ENCODE measurements at regions of chr20 and their contacts with region 1.

Region 1: GRCh38 chr20:44598423-44599305 is 16.3 kb downstream of the PKIG start:
- DNase-seq: peak; percentile 63
- H3K4me3 ChIP-seq: peak overlapping the region; percentile 51
- H3K27ac ChIP-seq: peak overlapping the region; percentile 93
- H3K4me1 ChIP-seq: peaks cover 100% of the 10 kb centered on the region
- H3K27me3 ChIP-seq: no peaks in the 10 kb centered on the region
- CTCF ChIP-seq: peak; percentile 33

Region 2: GRCh38 chr20:44310664-44311639 is 287.7 kb before region 1 on chr20 and contains the start of gene FITM2:
- intact Hi-C with region 1: no loop called
- DNase-seq: peak; percentile 99
- H3K4me3 ChIP-seq: peak within 1 kb of the TSS; percentile 85
- H3K27ac ChIP-seq: peak within 1 kb of the TSS; percentile 91
- H3K4me1 ChIP-seq: peaks cover 56% of the 10 kb centered on the region
- H3K27me3 ChIP-seq: no peaks in the 10 kb centered on the region
- CTCF ChIP-seq: peak; percentile 95
- total RNA-seq, gene FITM2: 160 TPM

Region 3: DNA sequence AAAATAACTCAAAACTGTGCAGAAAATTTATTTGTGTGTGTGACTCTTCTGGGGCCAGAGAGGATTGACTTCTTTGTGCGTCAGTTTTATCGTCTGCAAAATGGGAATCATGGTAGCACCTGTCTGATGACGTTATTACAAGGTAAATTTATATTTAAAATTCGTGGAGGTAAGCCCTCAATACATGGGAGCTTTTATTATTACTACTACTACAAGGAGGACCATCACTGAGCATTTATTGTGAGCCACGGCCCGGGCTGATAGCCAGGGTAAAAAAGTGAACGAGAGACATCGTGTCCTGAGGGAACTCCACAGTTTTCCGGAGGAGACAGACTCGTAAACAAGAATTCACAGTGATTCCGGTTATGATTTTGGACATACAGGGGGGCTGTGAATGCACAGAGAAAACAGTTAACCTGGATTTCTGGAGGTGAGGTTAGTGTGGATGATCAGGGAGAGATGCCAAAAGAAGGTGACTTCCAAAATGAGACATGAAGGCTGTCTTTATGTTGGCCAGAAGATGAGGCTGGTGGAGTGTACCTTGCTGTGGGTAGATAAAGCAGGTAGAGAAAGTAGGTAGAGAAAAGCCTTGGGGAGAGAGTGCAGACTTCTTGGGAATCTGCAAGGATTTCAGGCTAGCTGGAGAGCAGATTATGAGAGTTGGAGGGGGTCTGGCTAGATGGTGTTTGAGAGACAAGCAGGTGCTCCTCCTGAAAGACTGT is 66.2 kb before region 1 on chr20:
- intact Hi-C with region 1: loop called (anchors 10 kb)
- DNase-seq: peak; percentile 34
- H3K4me3 ChIP-seq: peak overlapping the region; percentile 80
- H3K27ac ChIP-seq: peak overlapping the region; percentile 80
- H3K4me1 ChIP-seq: peaks cover 27% of the 10 kb centered on the region
- H3K27me3 ChIP-seq: no peaks in the 10 kb centered on the region
- CTCF ChIP-seq: no peak

Region 4: DNA sequence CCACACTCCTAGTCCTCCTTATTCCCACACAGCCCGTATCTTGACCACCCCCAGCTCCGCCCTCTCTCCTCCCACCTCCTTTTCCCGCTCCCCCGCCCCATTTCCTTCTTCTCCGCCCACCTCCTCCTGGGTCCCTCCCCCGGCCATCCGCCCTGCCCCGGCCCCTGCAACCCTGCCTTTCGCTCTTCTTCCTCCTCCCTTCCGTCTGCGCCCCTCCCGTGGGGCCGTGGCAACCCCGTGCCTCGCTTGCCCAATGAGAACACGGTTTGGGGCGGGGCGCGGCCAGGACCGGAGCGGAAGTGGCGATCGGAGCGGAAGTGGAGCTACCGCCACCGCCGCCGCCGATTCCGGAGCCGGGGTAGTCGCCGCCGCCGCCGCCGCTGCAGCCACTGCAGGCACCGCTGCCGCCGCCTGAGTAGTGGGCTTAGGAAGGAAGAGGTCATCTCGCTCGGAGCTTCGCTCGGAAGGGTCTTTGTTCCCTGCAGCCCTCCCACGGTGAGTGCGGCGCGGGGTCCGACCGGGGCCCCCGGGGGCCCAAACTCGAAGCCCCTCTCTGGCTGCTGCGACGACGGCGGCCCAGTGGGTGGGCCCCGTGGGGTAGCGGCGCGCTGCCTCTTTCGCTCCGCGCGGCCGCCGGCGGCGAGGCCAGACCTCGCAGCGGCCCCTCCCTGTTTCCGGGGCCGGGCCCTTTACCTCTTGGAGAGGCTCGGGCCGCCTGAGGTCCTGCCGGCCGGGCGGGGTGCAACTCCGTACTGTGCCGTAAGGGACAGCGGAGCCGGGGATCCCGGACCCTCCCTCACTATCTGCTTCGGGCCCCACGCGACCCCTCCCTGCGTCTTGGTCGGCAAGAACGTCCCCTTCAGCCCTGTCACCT is 287.0 kb after region 1 on chr20 and contains the start of gene YWHAB:
- intact Hi-C with region 1: no loop called
- DNase-seq: peak; percentile 99
- H3K4me3 ChIP-seq: peak within 1 kb of the TSS; percentile 93
- H3K27ac ChIP-seq: peak within 1 kb of the TSS; percentile 99
- H3K4me1 ChIP-seq: peaks cover 61% of the 10 kb centered on the region
- H3K27me3 ChIP-seq: no peaks in the 10 kb centered on the region
- CTCF ChIP-seq: peak; percentile 50
- total RNA-seq, gene YWHAB: 106 TPM